Activated naive CD4-positive, alpha-beta T cell treated with anti-CD3 and anti-CD28 coated beads for 36 hours (primary cell): ENCODE measurements at regions of chr1 and their contacts with region 1.

Region 1: GRCh38 chr1:181551754-181552153 is 68.4 kb downstream of the CACNA1E start:
- DNase-seq: no peak
- H3K4me3 Mint-ChIP-seq: no peak overlapping the region
- H3K27ac Mint-ChIP-seq: no peak overlapping the region
- H3K4me1 Mint-ChIP-seq: no peaks in the 10 kb centered on the region
- H3K27me3 Mint-ChIP-seq: peaks cover 22% of the 10 kb centered on the region

Region 2: GRCh38 chr1:181531951-181532600 is 19.7 kb before region 1 on chr1:
- CTCF ChIA-PET with region 1: interaction called, 10 read pairs
- intact Hi-C with region 1: no loop called
- DNase-seq: no peak
- H3K4me3 Mint-ChIP-seq: no peak overlapping the region
- H3K27ac Mint-ChIP-seq: no peak overlapping the region
- H3K4me1 Mint-ChIP-seq: no peaks in the 10 kb centered on the region
- H3K27me3 Mint-ChIP-seq: peaks cover 8% of the 10 kb centered on the region